ENCODE measurements at regions of chr5 and their contacts with region 1.

Region 1: DNA sequence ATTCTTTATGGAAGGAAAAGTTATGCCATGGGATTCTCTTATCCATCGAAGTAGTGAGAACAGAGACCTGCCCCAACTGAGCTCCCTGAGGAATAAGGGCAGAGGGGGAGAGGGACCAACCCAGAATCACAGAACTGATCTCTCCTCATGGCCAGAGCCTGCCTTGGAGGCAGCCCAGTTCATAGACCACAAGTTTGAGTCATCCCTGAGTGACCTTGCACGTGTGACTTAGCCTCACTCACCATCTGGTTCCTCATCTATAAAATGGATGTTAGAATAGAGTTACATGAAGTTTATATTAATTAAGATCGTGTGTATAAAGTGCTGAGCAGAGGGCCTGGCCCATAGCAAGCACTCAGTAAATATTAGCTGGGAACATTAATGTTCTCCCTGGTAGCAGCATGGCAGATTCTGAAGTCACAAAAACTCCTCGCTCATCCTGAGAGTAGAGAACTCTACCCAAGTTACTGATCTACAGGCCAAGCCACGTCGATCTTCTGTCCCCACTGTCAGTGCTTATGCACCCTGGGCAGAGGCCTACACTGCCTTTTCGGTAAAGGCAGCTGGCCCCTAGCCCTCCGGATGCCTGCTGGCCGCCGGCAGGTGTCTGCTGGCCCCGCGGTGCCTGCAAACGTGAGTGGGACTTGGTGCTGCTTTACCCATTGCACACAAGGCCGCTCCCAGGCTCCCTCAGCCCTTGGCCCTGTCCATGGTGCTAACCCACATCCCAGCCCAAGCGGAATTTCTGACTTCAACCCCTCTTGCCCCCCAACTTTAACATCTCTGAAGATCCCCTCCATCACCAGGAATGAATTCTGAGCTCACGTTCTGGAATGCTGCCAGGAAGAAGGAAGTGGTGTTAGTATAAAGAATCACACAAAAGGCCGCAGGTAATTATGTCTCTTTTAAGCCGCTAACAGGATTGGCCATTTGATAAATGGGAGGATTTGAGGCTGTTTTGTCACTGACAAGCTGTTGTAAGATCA is 61.1 kb upstream of the ARAP3 start:
- DNase-seq: peak; percentile 45 to 52 (median 47)
- ATAC-seq: peak; percentile 59; the same call in 2 of the 3 replicates
- H3K4me3 ChIP-seq: no peak overlapping the region
- H3K27ac ChIP-seq: no peak overlapping the region
- H3K4me1 ChIP-seq: peaks cover 3 to 4% of the 10 kb centered on the region in 2 experiments; a peak in 3 of 5 replicates
- H3K27me3 ChIP-seq: peaks cover 0 to 5% of the 10 kb centered on the region in 2 experiments; a peak in 1 of 5 replicates
- CTCF ChIP-seq: no peak
- EP300 ChIP-seq: no peak
- POLR2A ChIP-seq: no peak
- RAD21 ChIP-seq: no peak

Region 2: DNA sequence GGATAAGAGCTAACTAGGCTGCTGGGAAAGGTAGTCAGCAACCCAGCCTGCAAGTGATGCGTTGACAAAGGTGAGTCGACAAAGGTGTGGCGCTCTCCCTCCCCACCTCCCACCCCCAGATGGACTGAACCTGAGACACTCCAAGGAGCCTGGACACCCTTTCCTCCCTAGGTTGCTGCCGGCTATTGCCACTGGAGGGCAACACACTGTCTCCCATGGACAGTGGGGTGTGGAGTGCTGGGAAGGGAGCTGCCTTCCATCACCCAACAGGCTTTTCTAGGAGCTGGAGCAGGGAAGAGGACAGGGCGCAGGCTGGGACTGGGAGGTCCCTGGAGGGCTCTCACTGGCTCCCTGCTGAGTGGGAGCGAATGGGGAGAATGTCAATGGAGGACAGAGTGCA is 14.2 kb after region 1 on chr5:
- CTCF ChIA-PET with region 1: no interaction called
- POLR2A ChIA-PET with region 1: no interaction called
- in situ Hi-C with region 1: no loop called
- intact Hi-C with region 1: loop called (anchors 1 kb)
- DNase-seq: peak; percentile 31 to 55 (median 38)
- ATAC-seq: peak; percentile 85
- H3K4me3 ChIP-seq: no peak overlapping the region
- H3K27ac ChIP-seq: no peak overlapping the region
- H3K4me1 ChIP-seq: peaks cover 0 to 5% of the 10 kb centered on the region in 2 experiments; a peak in 1 of 5 replicates
- H3K27me3 ChIP-seq: peaks cover 24 to 74% of the 10 kb centered on the region in 2 experiments; a peak in 4 of 5 replicates
- CTCF ChIP-seq: peak; percentile 49 to 59 (median 52)
- EP300 ChIP-seq: no peak
- POLR2A ChIP-seq: no peak
- RAD21 ChIP-seq: peak; percentile 26 to 65; a peak in 2 of 4 replicates